ENCODE measurements at regions of chr13 and their contacts with region 1.

Region 1: DNA sequence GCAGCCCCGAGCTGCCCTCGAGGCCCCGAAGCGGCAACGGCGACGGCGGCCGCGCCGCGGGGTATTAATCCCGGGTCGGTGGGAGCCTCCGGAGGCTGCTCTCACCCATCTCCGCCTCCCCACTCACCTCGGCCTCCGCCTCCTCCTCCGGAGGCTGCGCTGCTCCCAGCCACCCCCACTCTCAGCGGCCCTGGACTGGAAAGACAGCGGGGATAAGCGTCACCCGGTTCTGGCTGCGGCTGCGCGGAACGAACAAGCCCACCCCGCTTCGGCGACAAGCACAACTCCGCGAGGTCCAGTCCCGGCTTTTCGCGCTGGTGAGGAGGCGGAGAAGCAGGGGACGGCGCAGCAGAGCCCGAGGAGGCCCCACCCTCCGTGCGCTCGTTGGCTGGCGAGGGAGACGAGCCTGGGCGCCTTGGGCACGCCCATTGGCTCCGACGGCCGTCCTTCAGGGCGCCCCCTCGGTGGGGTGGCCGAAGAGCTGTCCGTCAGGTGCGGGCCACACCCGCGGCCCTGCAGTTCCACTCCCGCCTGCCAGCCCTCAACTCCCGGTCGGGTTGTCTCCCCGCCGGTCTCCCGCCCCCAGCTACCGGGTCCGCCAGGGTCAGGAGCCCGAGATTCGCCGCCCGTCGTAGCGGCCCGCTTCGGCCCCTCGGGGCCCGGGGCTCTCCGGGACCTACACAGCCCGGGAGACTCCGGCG is at the start of gene ZMYM5:
- DNase-seq: peak; percentile 92 to 97 (median 92)
- H3K4me3 ChIP-seq: peak within 1 kb of the TSS; percentile 89
- H3K4me3 Mint-ChIP-seq: peak within 1 kb of the TSS; percentile 87 to 98 (median 96)
- H3K27ac ChIP-seq: peak within 1 kb of the TSS; percentile 86
- H3K27ac Mint-ChIP-seq: peak within 1 kb of the TSS; percentile 89 to 99 (median 96)
- H3K4me1 ChIP-seq: peaks cover 17% of the 10 kb centered on the region
- H3K4me1 Mint-ChIP-seq: peaks cover 34 to 51% (median 46%) of the 10 kb centered on the region in 3 donors
- H3K27me3 ChIP-seq: no peaks in the 10 kb centered on the region
- H3K27me3 Mint-ChIP-seq: no peaks in the 10 kb centered on the region
- total RNA-seq, gene ZMYM5: 11.9 to 12.2 TPM

Region 2: GRCh38 chr13:19622188-19622587 is 241.3 kb before region 1 on chr13:
- CTCF ChIA-PET with region 1: no interaction called
- POLR2A ChIA-PET with region 1: no interaction called
- DNase-seq: no peak
- H3K4me3 ChIP-seq: no peak overlapping the region
- H3K4me3 Mint-ChIP-seq: no peak overlapping the region
- H3K27ac ChIP-seq: no peak overlapping the region
- H3K27ac Mint-ChIP-seq: no peak overlapping the region
- H3K4me1 ChIP-seq: no peaks in the 10 kb centered on the region
- H3K4me1 Mint-ChIP-seq: no peaks in the 10 kb centered on the region
- H3K27me3 ChIP-seq: peaks cover 4% of the 10 kb centered on the region
- H3K27me3 Mint-ChIP-seq: peaks cover 20 to 64% of the 10 kb centered on the region in 2 donors

Region 3: DNA sequence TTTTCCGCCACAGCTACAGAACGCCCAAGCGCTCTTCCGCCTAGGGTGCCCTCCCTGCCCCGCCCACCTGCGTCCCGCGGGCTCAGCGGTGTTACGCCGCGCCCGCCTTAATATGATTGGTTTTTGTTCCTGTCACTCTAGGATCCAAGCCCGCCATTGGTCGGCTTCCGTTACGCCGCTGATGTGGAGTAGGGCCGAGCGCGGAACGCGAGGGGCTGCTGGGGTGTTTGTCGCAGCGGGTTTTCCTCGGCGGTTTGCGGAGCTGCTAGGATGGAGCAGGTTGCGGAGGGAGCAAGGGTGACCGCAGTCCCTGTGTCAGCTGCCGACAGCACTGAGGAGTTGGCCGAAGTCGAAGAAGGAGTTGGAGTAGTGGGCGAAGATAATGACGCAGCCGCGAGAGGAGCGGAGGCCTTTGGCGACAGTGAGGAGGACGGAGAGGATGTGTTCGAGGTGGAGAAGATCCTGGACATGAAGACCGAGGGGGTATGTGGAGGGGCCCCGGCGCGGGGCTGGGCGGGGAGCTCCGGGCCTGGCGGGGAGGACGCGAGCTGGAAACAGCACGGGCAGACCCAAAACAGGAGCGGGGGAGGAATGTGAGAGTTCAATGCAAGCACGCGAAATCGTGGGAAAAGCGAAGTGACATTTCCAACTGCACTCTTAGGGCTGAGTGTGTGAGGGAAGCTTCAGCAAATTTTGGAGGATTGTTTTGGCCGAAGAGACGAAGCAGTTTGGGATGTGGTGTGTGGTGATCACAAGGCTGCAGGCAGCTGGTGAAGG is 229.8 kb before region 1 on chr13 and contains the start of gene MPHOSPH8:
- CTCF ChIA-PET with region 1: no interaction called
- POLR2A ChIA-PET with region 1: interaction called, 11 read pairs
- DNase-seq: peak; percentile 89 to 95 (median 92)
- H3K4me3 ChIP-seq: peak within 1 kb of the TSS; percentile 97
- H3K4me3 Mint-ChIP-seq: peak within 1 kb of the TSS; percentile 100
- H3K27ac ChIP-seq: peak within 1 kb of the TSS; percentile 94
- H3K27ac Mint-ChIP-seq: peak within 1 kb of the TSS; percentile 90 to 100 (median 100)
- H3K4me1 ChIP-seq: peaks cover 27% of the 10 kb centered on the region
- H3K4me1 Mint-ChIP-seq: peaks cover 36 to 44% (median 41%) of the 10 kb centered on the region in 3 donors
- H3K27me3 ChIP-seq: no peaks in the 10 kb centered on the region
- H3K27me3 Mint-ChIP-seq: peaks cover 0 to 5% of the 10 kb centered on the region in 2 donors
- total RNA-seq, gene MPHOSPH8: 40.8 to 41.0 TPM

Region 4: GRCh38 chr13:19695829-19696228 is 167.6 kb before region 1 on chr13:
- CTCF ChIA-PET with region 1: no interaction called
- POLR2A ChIA-PET with region 1: no interaction called
- DNase-seq: no peak
- H3K4me3 ChIP-seq: no peak overlapping the region
- H3K4me3 Mint-ChIP-seq: no peak overlapping the region
- H3K27ac ChIP-seq: no peak overlapping the region
- H3K27ac Mint-ChIP-seq: no peak overlapping the region
- H3K4me1 ChIP-seq: no peaks in the 10 kb centered on the region
- H3K4me1 Mint-ChIP-seq: peaks cover 23 to 54% (median 50%) of the 10 kb centered on the region in 3 donors
- H3K27me3 ChIP-seq: no peaks in the 10 kb centered on the region
- H3K27me3 Mint-ChIP-seq: no peaks in the 10 kb centered on the region

Region 5: GRCh38 chr13:19782049-19782726 is 81.3 kb before region 1 on chr13:
- CTCF ChIA-PET with region 1: interaction called, 10 read pairs
- POLR2A ChIA-PET with region 1: interaction called, 30 read pairs
- DNase-seq: peak in 4 of 5 donors; percentile 38 to 70 (median 48)
- H3K4me3 ChIP-seq: peak overlapping the region; percentile 97
- H3K4me3 Mint-ChIP-seq: peak overlapping the region; percentile 98 to 100 (median 99)
- H3K27ac ChIP-seq: peak overlapping the region; percentile 96
- H3K27ac Mint-ChIP-seq: peak overlapping the region; percentile 97 to 99 (median 99)
- H3K4me1 ChIP-seq: peaks cover 5% of the 10 kb centered on the region
- H3K4me1 Mint-ChIP-seq: peaks cover 7 to 13% (median 9%) of the 10 kb centered on the region in 3 donors
- H3K27me3 ChIP-seq: no peaks in the 10 kb centered on the region
- H3K27me3 Mint-ChIP-seq: peaks cover 0 to 6% of the 10 kb centered on the region in 2 donors

Region 6: GRCh38 chr13:19958155-19959111 is 95.0 kb after region 1 on chr13 and contains the start of gene ZMYM2:
- CTCF ChIA-PET with region 1: interaction called, 6 read pairs
- POLR2A ChIA-PET with region 1: interaction called, 10 read pairs
- DNase-seq: peak; percentile 95 to 98 (median 98)
- H3K4me3 ChIP-seq: peak within 1 kb of the TSS; percentile 94
- H3K4me3 Mint-ChIP-seq: peak within 1 kb of the TSS; percentile 88 to 99 (median 97)
- H3K27ac ChIP-seq: peak within 1 kb of the TSS; percentile 87
- H3K27ac Mint-ChIP-seq: peak within 1 kb of the TSS; percentile 91 to 99 (median 96)
- H3K4me1 ChIP-seq: peaks cover 34% of the 10 kb centered on the region
- H3K4me1 Mint-ChIP-seq: peaks cover 28 to 39% (median 36%) of the 10 kb centered on the region in 3 donors
- H3K27me3 ChIP-seq: no peaks in the 10 kb centered on the region
- H3K27me3 Mint-ChIP-seq: peaks cover 0 to 1% of the 10 kb centered on the region in 2 donors
- total RNA-seq, gene ZMYM2: 41.4 to 42.1 TPM

Region 7: DNA sequence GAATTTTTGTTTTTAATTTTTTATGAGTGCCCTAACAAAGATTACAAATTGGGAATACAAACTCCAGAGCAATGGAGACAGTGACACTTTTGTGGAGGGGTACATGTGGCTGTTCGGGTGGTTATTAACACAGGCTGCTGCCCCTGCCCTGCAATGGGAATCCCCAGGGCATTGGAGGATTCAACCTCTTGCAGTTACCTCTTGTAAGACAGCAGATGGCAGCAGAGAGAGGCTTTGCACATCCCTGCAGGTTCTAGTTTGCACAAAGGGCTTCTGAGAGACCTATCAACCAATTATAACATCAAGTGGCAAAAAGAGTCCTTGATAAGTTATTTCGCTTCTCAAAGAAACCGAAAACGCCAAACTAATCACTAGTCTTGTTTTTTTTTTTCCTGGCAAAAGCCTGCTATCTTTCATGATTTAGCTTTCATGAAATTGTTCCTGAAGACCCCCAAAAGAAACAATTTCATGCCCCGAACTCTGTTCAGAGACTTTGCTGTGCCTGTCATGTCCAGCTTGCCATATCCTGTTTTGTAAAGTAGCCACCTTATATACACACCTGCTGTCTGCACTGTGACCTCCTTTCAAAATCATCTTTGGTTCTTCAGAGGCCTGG is 318.9 kb after region 1 on chr13:
- CTCF ChIA-PET with region 1: no interaction called
- POLR2A ChIA-PET with region 1: interaction called, 19 read pairs
- DNase-seq: peak in 4 of 5 donors; percentile 18 to 66 (median 58)
- H3K4me3 ChIP-seq: no peak overlapping the region
- H3K4me3 Mint-ChIP-seq: no peak overlapping the region
- H3K27ac ChIP-seq: no peak overlapping the region
- H3K27ac Mint-ChIP-seq: no peak overlapping the region
- H3K4me1 ChIP-seq: no peaks in the 10 kb centered on the region
- H3K4me1 Mint-ChIP-seq: peaks cover 0 to 2% (median 0%) of the 10 kb centered on the region in 3 donors
- H3K27me3 ChIP-seq: peaks cover 8% of the 10 kb centered on the region
- H3K27me3 Mint-ChIP-seq: peaks cover 31 to 53% of the 10 kb centered on the region in 2 donors

Region 8: GRCh38 chr13:20231839-20232555 is 368.5 kb after region 1 on chr13 and contains the start of gene GJB6:
- CTCF ChIA-PET with region 1: no interaction called
- POLR2A ChIA-PET with region 1: no interaction called
- DNase-seq: peak in 1 of 5 donors; percentile 32
- H3K4me3 ChIP-seq: peak within 1 kb of the TSS; percentile 73
- H3K4me3 Mint-ChIP-seq: peak within 1 kb of the TSS; percentile 75 to 91 (median 83)
- H3K27ac ChIP-seq: no peak within 1 kb of the TSS
- H3K27ac Mint-ChIP-seq: peak within 1 kb of the TSS in 3 of 8 donors; percentile 62 to 72 (median 70)
- H3K4me1 ChIP-seq: peaks cover 5% of the 10 kb centered on the region
- H3K4me1 Mint-ChIP-seq: peaks cover 7 to 17% (median 14%) of the 10 kb centered on the region in 3 donors
- H3K27me3 ChIP-seq: peaks cover 7% of the 10 kb centered on the region
- H3K27me3 Mint-ChIP-seq: peaks cover 40 to 58% of the 10 kb centered on the region in 2 donors
- total RNA-seq, gene GJB6: 7.3 to 7.7 TPM